ENCODE measurements at regions of chr9 and their contacts with region 1.

Region 1: DNA sequence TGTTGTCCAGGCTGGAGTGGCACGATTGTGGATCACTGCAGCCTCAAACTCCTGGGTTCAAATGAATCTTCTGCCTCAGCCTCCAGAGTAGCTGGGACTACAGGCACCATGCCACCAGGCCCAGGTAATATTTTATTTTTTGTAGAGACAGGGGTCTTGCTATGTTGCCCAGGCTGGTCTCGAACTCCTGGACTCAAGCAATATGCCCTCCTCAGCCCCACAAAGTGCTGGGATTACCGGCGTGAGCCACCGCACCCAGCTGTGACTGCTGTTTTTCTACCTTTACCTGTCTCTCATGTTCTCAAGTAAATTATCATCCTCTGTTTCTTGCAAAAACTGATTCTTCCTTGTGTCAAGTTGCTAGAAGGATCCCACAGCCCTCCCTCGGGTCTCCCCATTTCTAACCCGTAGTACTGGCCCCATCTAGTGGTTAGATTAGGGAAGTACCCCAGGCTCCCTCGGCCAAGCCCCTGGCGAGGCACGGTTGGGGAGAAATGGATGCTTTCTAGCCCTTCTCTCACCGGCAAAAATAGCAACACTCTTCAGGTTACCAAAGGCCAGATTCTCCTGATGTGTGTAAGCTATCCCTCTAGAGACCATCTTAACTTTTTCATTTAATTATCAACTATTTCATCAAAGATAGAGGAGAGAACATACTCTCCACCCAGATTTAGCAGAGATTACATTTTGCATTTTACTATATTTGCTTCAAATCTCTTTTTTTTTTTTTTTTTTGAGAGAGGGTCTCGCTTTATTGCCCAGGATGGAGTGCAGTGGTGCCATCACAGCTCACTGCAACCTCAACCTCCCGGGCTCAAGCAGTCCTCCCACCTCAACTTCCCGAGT is 19.2 kb upstream of the TOR1B start:
- DNase-seq: peak; percentile 33 to 48
- ATAC-seq: peak; percentile 81 to 89
- H3K4me3 ChIP-seq: no peak overlapping the region
- H3K27ac ChIP-seq: no peak overlapping the region
- H3K4me1 ChIP-seq: no peaks in the 10 kb centered on the region
- H3K27me3 ChIP-seq: peaks cover 0 to 6% (median 5%) of the 10 kb centered on the region in 3 donors
- CTCF ChIP-seq: peak; percentile 76 to 89 (median 85)
- POLR2A ChIP-seq: no peak

Region 2: DNA sequence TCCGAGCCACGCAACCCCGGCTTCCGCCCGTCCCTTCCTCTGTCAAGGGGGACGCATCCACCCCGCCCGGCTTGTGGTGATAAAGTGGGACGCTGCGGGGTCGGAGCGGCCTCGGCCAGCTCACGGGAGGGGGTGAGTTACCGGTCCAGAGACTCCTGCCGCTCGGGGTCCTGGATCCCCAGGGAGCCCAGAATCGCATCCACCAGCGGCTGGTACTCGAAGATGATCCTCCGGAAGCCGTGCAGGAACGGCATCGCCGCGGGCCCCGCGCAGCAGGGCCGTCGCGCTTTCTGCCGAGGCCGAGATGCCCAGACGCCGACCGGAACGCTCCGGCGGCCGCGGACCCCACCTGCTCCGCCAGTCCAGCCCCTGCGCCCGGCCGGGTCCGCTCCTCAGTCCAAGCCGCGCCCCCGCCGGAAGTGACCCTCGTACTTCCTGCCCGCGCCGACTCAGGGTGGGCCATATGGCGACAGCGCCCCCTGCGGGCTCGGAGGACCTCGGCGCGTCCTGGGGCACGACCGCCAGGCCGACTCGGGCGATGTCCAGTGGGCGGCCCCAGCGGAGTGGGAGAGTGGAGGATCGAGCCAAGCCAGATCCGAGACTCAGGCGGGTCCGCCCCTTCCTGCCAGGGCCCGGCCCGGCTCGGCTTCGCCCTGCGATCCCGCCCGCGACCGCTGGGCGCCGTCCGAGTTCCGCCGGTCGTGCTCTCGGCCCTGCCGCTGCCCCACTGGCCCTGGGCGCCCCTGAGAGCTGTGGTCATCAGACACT is 141.8 kb before region 1 on chr9 and contains the start of gene ASB6:
- in situ Hi-C with region 1: loop called in 2 of 4 experiments (anchors 10 to 25 kb)
- intact Hi-C with region 1: loop called (anchors 1 kb)
- DNase-seq: peak; percentile 92 to 95
- ATAC-seq: peak; percentile 88 to 92
- H3K4me3 ChIP-seq: peak within 1 kb of the TSS; percentile 89 to 100 (median 96)
- H3K27ac ChIP-seq: peak within 1 kb of the TSS; percentile 80 to 94 (median 82)
- H3K4me1 ChIP-seq: peaks cover 15 to 21% of the 10 kb centered on the region in 2 donors
- H3K27me3 ChIP-seq: no peaks in the 10 kb centered on the region
- CTCF ChIP-seq: peak; percentile 95 to 100 (median 100)
- POLR2A ChIP-seq: peak; percentile 38 to 71
- total RNA-seq, gene ASB6: 14.4 to 24.0 (median 19.4) TPM

Region 3: DNA sequence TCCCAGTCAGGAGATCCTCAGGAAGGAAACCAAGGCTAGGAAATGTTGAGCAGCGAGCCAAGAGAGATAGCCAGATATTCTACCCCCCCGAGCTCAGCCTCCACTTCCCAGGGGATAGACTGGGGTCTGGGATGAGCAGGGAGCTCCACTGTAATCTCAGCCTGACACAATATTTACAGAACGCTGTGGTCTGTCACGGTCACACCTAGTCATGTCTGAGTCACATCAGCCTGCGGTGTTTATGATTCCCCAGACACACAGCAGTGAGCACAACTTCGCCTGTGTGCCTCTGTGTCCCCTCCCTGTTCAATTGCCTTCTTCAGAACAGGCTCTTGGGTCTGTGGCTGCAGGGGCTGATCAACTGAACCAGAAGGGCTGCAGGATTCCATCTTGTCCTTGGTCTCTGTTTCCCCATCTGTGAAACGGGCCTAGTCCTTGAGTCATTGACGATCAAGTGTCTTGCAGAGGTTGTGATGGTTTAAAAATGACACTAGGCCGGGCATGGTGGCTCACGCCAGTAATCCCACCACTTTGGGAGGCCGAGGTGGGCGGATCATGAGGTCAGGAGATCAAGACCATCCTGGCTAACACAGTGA is 126.8 kb before region 1 on chr9:
- in situ Hi-C with region 1: loop called in 2 of 4 experiments (anchors 5 to 10 kb)
- intact Hi-C with region 1: no loop called
- DNase-seq: no peak
- ATAC-seq: no peak
- H3K4me3 ChIP-seq: no peak overlapping the region
- H3K27ac ChIP-seq: no peak overlapping the region
- H3K4me1 ChIP-seq: no peaks in the 10 kb centered on the region
- H3K27me3 ChIP-seq: peaks cover 0 to 8% (median 0%) of the 10 kb centered on the region in 3 donors
- CTCF ChIP-seq: no peak
- POLR2A ChIP-seq: no peak

Region 4: GRCh38 chr9:129737479-129738274 is 46.1 kb before region 1 on chr9:
- in situ Hi-C with region 1: loop called (anchors 5 to 10 kb)
- intact Hi-C with region 1: loop called (anchors 1 kb)
- DNase-seq: peak; percentile 59 to 64
- ATAC-seq: peak; percentile 91 to 93
- H3K4me3 ChIP-seq: peak overlapping the region; percentile 63 to 89 (median 68)
- H3K27ac ChIP-seq: peak overlapping the region; percentile 49 to 71 (median 57)
- H3K4me1 ChIP-seq: no peaks in the 10 kb centered on the region
- H3K27me3 ChIP-seq: peaks cover 0 to 3% (median 0%) of the 10 kb centered on the region in 3 donors
- CTCF ChIP-seq: peak; percentile 93 to 98 (median 95)
- POLR2A ChIP-seq: no peak

Measured in gastrocnemius medialis (tissue), 4 donors.